ENCODE measurements at regions of chr14 and their contacts with region 1.

Region 1: GRCh38 chr14:20482382-20482781 is 13.2 kb downstream of the PNP start:
- DNase-seq: peak; percentile 29 to 63 (median 39)
- ATAC-seq: peak; percentile 52
- H3K4me3 ChIP-seq: no peak overlapping the region
- H3K27ac ChIP-seq: peak overlapping the region; percentile 59; the same call in 2 of the 3 replicates
- H3K4me1 ChIP-seq: peaks cover 7 to 54% of the 10 kb centered on the region in 2 experiments; a peak in 4 of 5 replicates
- H3K27me3 ChIP-seq: no peaks in the 10 kb centered on the region
- CTCF ChIP-seq: no peak
- EP300 ChIP-seq: peak; percentile 62; the same call in 1 of the 2 replicates
- POLR2A ChIP-seq: no peak
- RAD21 ChIP-seq: no peak

Region 2: GRCh38 chr14:19930617-19931016 is 551.8 kb before region 1 on chr14 and contains the start of gene OR4K1:
- CTCF ChIA-PET with region 1: no interaction called
- POLR2A ChIA-PET with region 1: no interaction called
- in situ Hi-C with region 1: no loop called
- intact Hi-C with region 1: no loop called
- DNase-seq: no peak
- ATAC-seq: no peak
- H3K4me3 ChIP-seq: no peak within 1 kb of the TSS
- H3K27ac ChIP-seq: no peak within 1 kb of the TSS
- H3K4me1 ChIP-seq: no peaks in the 10 kb centered on the region
- H3K27me3 ChIP-seq: no peaks in the 10 kb centered on the region
- CTCF ChIP-seq: no peak
- EP300 ChIP-seq: no peak
- POLR2A ChIP-seq: no peak
- RAD21 ChIP-seq: no peak
- polyA plus RNA-seq, gene OR4K1: not detected

Region 3: DNA sequence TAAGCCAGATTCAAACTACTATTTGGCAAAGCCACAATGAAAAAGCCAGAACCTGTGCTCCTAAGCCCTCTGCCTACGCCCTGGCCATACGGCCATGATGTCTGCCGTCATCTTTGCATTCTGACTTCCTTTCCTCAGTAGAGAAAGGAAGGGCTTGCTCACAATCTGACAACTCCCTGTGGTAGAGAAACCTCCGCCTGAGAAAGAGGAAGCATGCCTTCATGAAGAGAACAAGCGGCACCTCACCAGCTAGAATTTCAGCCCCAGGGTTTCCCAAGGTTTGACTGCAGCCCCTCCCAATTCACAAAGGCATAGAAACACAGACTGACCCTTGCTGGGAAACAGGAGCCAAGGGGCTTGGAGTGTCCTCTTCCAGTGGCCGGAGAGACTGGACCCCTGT is 94.8 kb before region 1 on chr14:
- CTCF ChIA-PET with region 1: no interaction called
- POLR2A ChIA-PET with region 1: no interaction called
- in situ Hi-C with region 1: no loop called
- intact Hi-C with region 1: no loop called
- DNase-seq: no peak
- ATAC-seq: no peak
- H3K4me3 ChIP-seq: no peak overlapping the region
- H3K27ac ChIP-seq: no peak overlapping the region
- H3K4me1 ChIP-seq: no peaks in the 10 kb centered on the region
- H3K27me3 ChIP-seq: no peaks in the 10 kb centered on the region
- CTCF ChIP-seq: no peak
- EP300 ChIP-seq: no peak
- POLR2A ChIP-seq: no peak
- RAD21 ChIP-seq: no peak

Region 4: GRCh38 chr14:20469242-20469889 is 13.0 kb before region 1 on chr14 and contains the start of gene PNP:
- CTCF ChIA-PET with region 1: no interaction called
- POLR2A ChIA-PET with region 1: interaction called, 30 read pairs
- in situ Hi-C with region 1: no loop called
- intact Hi-C with region 1: no loop called
- DNase-seq: peak; percentile 90 to 96 (median 91)
- ATAC-seq: peak; percentile 97
- H3K4me3 ChIP-seq: peak within 1 kb of the TSS; percentile 82
- H3K27ac ChIP-seq: peak within 1 kb of the TSS; percentile 76
- H3K4me1 ChIP-seq: peaks cover 5 to 15% of the 10 kb centered on the region in 2 experiments; a peak in 3 of 5 replicates
- H3K27me3 ChIP-seq: no peaks in the 10 kb centered on the region
- CTCF ChIP-seq: no peak
- EP300 ChIP-seq: no peak
- POLR2A ChIP-seq: peak; percentile 99
- RAD21 ChIP-seq: no peak
- polyA plus RNA-seq, gene PNP: 96.2 to 137 TPM